Activated CD4-positive, alpha-beta T cell treated with anti-CD3 and anti-CD28 coated beads for 36 hours (primary cell): ENCODE measurements at regions of chr11 and their contacts with region 1.

Region 1: GRCh38 chr11:102317099-102317767 is at the start of gene BIRC3:
- DNase-seq: peak; percentile 95
- ATAC-seq: peak; percentile 85
- H3K4me3 Mint-ChIP-seq: peak within 1 kb of the TSS; percentile 96
- H3K27ac Mint-ChIP-seq: peak within 1 kb of the TSS; percentile 99
- H3K4me1 Mint-ChIP-seq: peaks cover 68% of the 10 kb centered on the region
- H3K27me3 Mint-ChIP-seq: no peaks in the 10 kb centered on the region
- total RNA-seq, gene BIRC3: 99.2 to 109 TPM

Region 2: DNA sequence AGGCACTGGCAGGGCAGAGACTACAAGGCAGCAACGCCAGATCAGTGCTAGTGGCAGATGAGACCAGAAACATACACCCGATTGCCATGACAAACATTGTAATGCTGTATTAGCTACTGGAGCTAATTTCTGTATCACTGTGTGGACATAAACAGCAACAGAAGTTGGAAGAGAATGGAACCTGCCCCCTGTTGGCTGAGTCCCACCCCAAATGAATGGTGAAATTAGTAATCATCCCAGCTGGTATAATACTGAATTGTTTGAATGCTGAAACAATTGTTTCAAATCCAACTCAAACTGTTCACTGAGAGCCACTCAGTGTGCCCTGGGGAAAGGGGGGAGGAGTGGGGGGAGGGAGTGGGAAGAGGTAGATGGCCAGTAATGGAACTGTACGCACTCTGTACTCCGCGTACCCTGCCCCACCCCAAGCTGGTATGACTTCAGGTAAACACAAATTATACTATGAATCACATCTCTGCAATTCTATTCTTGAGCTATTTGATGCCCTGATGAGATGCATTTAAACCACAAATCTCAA is 11.1 kb before region 1 on chr11:
- CTCF ChIA-PET with region 1: interaction called, 17 read pairs
- POLR2A ChIA-PET with region 1: interaction called, 5 read pairs
- intact Hi-C with region 1: loop called (anchors 1 kb)
- DNase-seq: no peak
- ATAC-seq: peak; percentile 48
- H3K4me3 Mint-ChIP-seq: peak overlapping the region; percentile 54
- H3K27ac Mint-ChIP-seq: peak overlapping the region; percentile 86
- H3K4me1 Mint-ChIP-seq: peaks cover 55% of the 10 kb centered on the region
- H3K27me3 Mint-ChIP-seq: no peaks in the 10 kb centered on the region